ENCODE measurements at regions of chr20 and their contacts with region 1.

Region 1: DNA sequence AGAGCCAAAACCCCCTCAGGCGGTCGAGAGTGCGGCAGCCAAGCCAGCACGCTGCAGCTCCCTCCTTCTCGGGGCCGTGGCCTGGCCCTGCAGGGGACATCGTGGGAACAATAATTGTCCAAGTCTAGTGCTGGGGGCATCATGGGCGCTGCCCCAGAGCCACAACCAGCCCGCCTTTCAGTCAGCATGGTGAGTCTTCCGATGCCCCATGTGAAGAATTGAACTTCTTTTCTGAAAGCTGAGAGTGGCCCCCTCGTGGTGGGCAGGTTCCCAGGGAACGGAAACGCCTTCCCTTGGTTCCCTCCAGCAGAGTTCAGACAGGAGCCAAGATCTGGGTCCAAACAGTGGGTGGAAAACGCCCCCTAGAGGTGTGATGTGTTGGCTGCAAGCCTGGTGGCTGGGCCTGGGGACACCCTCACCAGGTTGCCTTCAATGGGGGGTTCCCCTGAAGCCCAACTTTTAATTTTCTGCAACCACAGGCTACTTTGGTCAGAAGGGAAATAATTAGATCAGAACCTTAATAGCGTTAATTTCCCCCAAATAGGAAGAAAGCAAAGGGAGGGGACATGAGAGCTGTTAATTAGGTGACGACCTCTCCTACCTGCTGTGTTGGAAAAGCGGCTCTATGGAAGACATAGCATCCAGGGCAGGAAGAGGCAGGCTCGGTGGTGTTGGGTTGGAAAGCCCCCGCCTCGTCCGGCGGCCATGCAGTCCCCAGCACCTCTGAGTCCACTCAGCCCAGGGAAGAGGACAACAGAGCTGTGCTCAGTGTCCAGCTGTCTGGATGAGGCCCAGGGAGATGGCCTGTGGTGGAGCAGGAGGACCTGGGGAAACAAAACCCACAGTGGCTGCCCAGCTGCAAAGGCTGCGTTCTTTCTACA is 4.7 kb upstream of the MRGBP start:
- DNase-seq: peak; percentile 47
- H3K4me3 ChIP-seq: no peak overlapping the region
- H3K27me3 ChIP-seq: no peaks in the 10 kb centered on the region; the same call in 1 of the 2 replicates
- CTCF ChIP-seq: peak; percentile 98

Region 2: DNA sequence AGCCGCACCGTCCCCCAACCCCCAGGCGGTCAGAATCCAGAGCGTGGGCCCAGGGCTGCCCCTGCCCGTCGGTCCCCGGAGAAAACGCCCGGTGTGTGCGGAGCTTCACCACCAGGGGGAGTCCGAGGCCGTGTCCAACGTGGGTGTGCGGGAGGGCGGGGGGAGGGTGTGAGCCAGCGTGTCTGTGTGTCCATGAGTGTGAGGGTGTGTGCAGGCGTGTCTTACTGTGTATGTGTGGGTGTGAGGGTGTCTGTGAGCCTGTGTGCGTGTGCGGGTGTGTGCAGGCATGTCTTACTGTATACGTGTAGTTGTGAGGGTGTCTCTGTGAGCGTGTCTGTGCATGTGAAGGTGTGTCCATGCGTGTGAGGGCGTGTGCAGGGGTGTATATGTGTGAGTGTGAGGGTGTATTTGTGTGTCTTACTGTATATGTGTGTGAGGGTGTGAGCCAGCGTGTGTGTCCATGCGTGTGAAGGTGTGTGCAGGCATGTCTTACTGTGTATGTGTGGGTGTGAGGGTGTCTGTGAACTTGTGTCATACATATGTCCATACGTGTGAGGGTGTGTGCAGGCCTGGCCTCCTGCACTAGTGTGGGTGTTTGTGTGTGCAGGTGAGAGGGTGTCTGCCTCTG is 291.2 kb before region 1 on chr20:
- CTCF ChIA-PET with region 1: interaction called, 13 read pairs
- POLR2A ChIA-PET with region 1: interaction called, 4 read pairs
- DNase-seq: no peak
- H3K4me3 ChIP-seq: no peak overlapping the region
- H3K27me3 ChIP-seq: no peaks in the 10 kb centered on the region
- CTCF ChIP-seq: peak; percentile 94

Region 3: GRCh38 chr20:62668441-62669027 is 123.0 kb before region 1 on chr20:
- CTCF ChIA-PET with region 1: interaction called, 72 read pairs
- POLR2A ChIA-PET with region 1: no interaction called
- DNase-seq: no peak
- H3K4me3 ChIP-seq: no peak overlapping the region
- H3K27me3 ChIP-seq: no peaks in the 10 kb centered on the region
- CTCF ChIP-seq: peak; percentile 85

Region 4: DNA sequence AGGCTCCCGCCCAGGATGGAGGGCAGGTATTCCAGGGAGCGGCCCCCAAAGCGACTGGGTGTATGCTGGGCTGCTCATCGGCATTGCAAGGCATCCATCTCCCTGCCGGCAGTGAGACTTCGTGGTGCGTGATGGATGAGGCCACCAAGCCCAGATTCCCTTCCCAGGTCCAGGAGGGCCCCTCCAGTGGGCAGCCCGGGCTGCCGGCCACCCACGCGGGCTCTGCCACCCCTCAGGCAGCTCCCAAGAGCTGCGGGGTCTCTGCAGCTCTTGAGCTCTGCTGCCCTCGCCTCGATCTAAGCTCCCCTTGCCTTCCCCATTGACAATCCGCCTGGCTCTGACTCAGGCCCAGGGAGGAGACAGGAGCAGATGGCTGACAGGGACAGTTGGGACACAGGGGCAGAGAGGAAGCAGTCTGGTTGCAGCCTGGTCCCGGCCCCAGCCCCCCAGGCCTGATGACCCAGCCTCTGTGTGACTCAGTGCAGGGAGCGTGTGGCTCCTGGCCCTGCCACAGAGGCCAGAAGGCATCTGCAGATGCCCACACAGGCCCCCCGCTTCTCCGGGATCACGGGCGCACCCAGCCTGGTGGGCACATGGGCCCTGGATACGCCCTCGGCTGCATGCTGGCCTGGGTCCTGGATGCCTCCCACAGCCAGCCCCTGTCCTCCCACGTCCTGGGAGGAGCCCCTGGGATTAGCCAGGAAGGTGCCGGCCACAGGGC is 116.2 kb before region 1 on chr20:
- CTCF ChIA-PET with region 1: interaction called, 72 read pairs
- POLR2A ChIA-PET with region 1: no interaction called
- DNase-seq: no peak
- H3K4me3 ChIP-seq: no peak overlapping the region
- H3K27me3 ChIP-seq: no peaks in the 10 kb centered on the region; the same call in 1 of the 2 replicates
- CTCF ChIP-seq: no peak

Region 5: GRCh38 chr20:62704301-62704948 is 87.1 kb before region 1 on chr20:
- CTCF ChIA-PET with region 1: interaction called, 39 read pairs
- POLR2A ChIA-PET with region 1: no interaction called
- DNase-seq: peak; percentile 57
- H3K4me3 ChIP-seq: no peak overlapping the region
- H3K27me3 ChIP-seq: peaks cover 9% of the 10 kb centered on the region
- CTCF ChIP-seq: peak; percentile 23; the same call in 1 of the 2 replicates

Region 6: GRCh38 chr20:62740286-62741141 is 51.0 kb before region 1 on chr20:
- CTCF ChIA-PET with region 1: interaction called, 11 read pairs
- POLR2A ChIA-PET with region 1: no interaction called
- DNase-seq: peak; percentile 59
- H3K4me3 ChIP-seq: no peak overlapping the region
- H3K27me3 ChIP-seq: no peaks in the 10 kb centered on the region
- CTCF ChIP-seq: no peak

Region 7: GRCh38 chr20:62808211-62808865 is 16.8 kb after region 1 on chr20:
- CTCF ChIA-PET with region 1: interaction called, 12 read pairs
- POLR2A ChIA-PET with region 1: no interaction called
- DNase-seq: no peak
- H3K4me3 ChIP-seq: no peak overlapping the region
- H3K27me3 ChIP-seq: no peaks in the 10 kb centered on the region
- CTCF ChIP-seq: peak; percentile 96

Region 8: DNA sequence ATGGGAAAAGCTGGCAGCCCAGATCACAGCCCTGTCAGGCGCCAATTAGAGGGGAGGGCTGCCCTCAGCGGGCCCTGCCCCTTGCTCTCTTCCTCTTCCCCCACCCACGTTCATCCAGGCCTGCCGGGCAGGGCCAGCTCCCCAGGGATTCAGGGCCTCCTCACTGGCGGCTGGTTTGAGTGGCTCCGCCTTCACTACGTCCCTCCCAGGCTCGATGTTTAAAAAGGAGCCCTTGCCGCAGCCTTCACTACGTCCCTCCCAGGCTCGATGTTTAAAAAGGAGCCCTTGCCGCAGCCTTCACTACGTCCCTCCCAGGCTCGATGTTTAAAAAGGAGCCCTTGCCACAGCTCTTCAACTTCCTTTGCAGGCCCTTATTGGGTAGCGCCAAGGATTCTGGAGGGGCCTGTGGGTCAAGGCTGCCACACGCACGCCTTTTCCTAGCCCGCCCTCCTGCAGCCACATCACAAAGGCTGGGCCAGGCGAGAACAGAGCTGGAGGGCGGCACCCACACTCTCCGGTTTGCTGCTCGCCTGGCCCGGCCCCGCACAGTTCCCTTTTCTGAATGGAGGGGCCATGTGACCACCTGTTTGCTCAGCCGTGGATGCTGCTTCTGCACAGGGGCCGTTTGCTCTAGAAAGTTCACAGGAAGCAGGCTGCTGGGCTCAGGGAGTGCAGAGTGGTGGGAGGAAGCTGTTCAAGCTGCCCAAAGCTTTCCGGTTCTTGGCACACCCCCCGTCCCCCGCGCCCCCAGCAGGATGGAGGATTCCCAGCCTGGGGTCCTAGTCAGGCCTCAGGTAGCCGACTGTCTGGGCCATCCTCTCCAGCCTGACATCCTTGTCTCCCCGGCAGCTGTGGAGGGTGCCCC is 162.5 kb after region 1 on chr20:
- CTCF ChIA-PET with region 1: no interaction called
- POLR2A ChIA-PET with region 1: no interaction called
- DNase-seq: no peak
- H3K4me3 ChIP-seq: peak overlapping the region; percentile 55
- H3K27me3 ChIP-seq: no peaks in the 10 kb centered on the region
- CTCF ChIP-seq: no peak